Activated CD4-positive, alpha-beta T cell treated with anti-CD3 and anti-CD28 coated beads for 36 hours (primary cell): ENCODE measurements at regions of chr1 and their contacts with region 1.

Region 1: GRCh38 chr1:225999227-225999911 is at the start of gene SDE2:
- DNase-seq: peak; percentile 100
- ATAC-seq: peak; percentile 90
- H3K4me3 Mint-ChIP-seq: peak within 1 kb of the TSS; percentile 89
- H3K27ac Mint-ChIP-seq: peak within 1 kb of the TSS; percentile 100
- H3K4me1 Mint-ChIP-seq: peaks cover 69% of the 10 kb centered on the region
- H3K27me3 Mint-ChIP-seq: no peaks in the 10 kb centered on the region
- total RNA-seq, gene SDE2: 13.5 to 15.0 TPM

Region 2: GRCh38 chr1:225428068-225428880 is 571.1 kb before region 1 on chr1:
- CTCF ChIA-PET with region 1: no interaction called
- POLR2A ChIA-PET with region 1: no interaction called
- intact Hi-C with region 1: loop called in 1 of 2 experiments (anchors 1 kb)
- DNase-seq: peak; percentile 95
- ATAC-seq: peak; percentile 92
- H3K4me3 Mint-ChIP-seq: peak overlapping the region; percentile 86
- H3K27ac Mint-ChIP-seq: peak overlapping the region; percentile 96
- H3K4me1 Mint-ChIP-seq: peaks cover 45% of the 10 kb centered on the region
- H3K27me3 Mint-ChIP-seq: no peaks in the 10 kb centered on the region

Region 3: DNA sequence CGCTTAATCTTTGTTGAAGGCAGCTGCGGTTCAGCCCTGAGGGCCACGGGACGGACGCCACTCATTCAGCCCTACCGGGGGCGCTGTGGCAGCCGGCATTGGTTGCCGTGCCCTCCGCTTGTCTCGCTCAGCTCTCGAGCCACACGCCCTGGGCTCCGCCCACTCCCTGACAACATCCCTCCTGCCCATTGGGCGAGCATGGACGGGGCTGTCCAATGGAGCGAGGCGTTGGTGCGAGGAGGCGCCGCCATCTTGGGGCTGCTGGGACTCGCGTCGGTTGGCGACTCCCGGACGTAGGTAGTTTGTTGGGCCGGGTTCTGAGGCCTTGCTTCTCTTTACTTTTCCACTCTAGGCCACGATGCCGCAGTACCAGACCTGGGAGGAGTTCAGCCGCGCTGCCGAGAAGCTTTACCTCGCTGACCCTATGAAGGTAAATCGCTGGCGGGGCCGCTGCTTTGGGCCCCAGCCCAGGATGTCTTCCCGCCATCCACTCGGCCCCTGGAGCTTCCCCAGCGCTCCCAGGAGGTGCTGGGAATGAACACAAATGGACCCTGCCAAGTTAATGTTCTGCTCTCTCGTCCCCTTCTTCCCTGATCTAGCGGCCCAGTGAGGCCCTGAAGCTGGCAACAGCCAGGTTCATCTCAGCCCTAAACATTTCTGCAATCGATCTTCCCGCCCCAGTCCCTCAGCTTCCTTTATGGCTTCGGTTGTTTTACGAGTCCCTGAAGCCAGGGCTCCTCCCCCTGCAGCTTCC is 221.6 kb before region 1 on chr1 and contains the start of gene SRP9:
- CTCF ChIA-PET with region 1: interaction called, 4 read pairs
- POLR2A ChIA-PET with region 1: interaction called, 17 read pairs
- intact Hi-C with region 1: loop called in 1 of 2 experiments (anchors 1 kb)
- DNase-seq: peak; percentile 99
- ATAC-seq: peak; percentile 97
- H3K4me3 Mint-ChIP-seq: no peak within 1 kb of the TSS
- H3K27ac Mint-ChIP-seq: no peak within 1 kb of the TSS
- H3K4me1 Mint-ChIP-seq: peaks cover 31% of the 10 kb centered on the region
- H3K27me3 Mint-ChIP-seq: no peaks in the 10 kb centered on the region
- total RNA-seq, gene SRP9: 263 to 308 TPM

Region 4: GRCh38 chr1:225933072-225933471 is 66.3 kb before region 1 on chr1:
- CTCF ChIA-PET with region 1: no interaction called
- POLR2A ChIA-PET with region 1: no interaction called
- intact Hi-C with region 1: no loop called
- DNase-seq: no peak
- ATAC-seq: peak; percentile 60
- H3K4me3 Mint-ChIP-seq: no peak overlapping the region
- H3K27ac Mint-ChIP-seq: no peak overlapping the region
- H3K4me1 Mint-ChIP-seq: peaks cover 17% of the 10 kb centered on the region
- H3K27me3 Mint-ChIP-seq: no peaks in the 10 kb centered on the region

Region 5: DNA sequence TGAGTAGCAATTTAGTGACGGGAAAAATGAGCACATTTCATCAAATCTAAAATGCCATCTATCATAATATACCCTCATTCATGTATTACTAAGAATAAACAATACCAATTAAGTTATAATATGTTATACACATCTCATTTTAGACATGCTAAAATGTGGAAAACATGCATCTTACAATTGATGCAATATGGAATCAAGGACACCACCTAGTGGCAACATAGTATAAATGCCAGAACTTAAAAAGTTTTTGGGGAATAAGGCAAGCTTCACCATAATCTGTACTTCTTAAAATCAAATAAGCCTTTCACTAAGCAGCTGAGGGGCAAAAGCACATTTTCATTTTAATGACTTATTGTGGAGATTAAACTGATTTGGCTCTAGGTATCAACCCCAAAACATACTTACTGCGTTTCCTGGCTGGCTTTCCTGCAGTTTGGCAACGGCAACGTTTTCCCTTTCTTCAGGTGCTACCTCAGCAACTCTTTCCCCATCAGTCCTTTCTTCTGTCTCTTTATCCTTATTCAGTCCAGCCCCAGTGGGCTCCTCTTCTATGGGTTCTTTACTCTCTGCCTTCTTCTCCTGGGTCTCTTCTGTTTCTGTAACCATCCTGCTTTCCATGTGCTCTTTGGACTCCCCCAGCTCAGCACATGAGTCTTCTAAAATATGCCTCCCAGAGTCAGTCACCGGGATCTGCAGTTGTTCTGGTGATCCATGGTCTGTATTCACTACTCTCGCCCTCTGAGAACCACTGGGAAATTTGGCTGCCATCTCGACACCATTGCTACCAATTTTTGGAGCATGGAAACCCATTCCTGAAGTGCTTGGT is 11.7 kb before region 1 on chr1:
- CTCF ChIA-PET with region 1: interaction called, 49 read pairs
- POLR2A ChIA-PET with region 1: interaction called, 6 read pairs
- intact Hi-C with region 1: loop called in 1 of 2 experiments (anchors 1 kb)
- DNase-seq: no peak
- ATAC-seq: no peak
- H3K4me3 Mint-ChIP-seq: no peak overlapping the region
- H3K27ac Mint-ChIP-seq: no peak overlapping the region
- H3K4me1 Mint-ChIP-seq: peaks cover 20% of the 10 kb centered on the region
- H3K27me3 Mint-ChIP-seq: no peaks in the 10 kb centered on the region

Region 6: GRCh38 chr1:226186124-226187018 is 187.0 kb after region 1 on chr1 and contains the start of gene ACBD3:
- CTCF ChIA-PET with region 1: no interaction called
- POLR2A ChIA-PET with region 1: no interaction called
- intact Hi-C with region 1: loop called (anchors 1 kb)
- DNase-seq: peak; percentile 91
- ATAC-seq: peak; percentile 97
- H3K4me3 Mint-ChIP-seq: peak within 1 kb of the TSS; percentile 91
- H3K27ac Mint-ChIP-seq: peak within 1 kb of the TSS; percentile 92
- H3K4me1 Mint-ChIP-seq: peaks cover 36% of the 10 kb centered on the region
- H3K27me3 Mint-ChIP-seq: no peaks in the 10 kb centered on the region
- total RNA-seq, gene ACBD3: 17.0 to 20.2 TPM